ENCODE measurements at regions of chr13 and their contacts with region 1.

Region 1: GRCh38 chr13:87274209-87274819 is 396.9 kb upstream of the SLITRK5 start:
- DNase-seq: peak in 1 of 2 donors; percentile 15
- ATAC-seq: no peak
- H3K4me3 ChIP-seq: no peak overlapping the region
- H3K27ac ChIP-seq: no peak overlapping the region
- H3K4me1 ChIP-seq: no peaks in the 10 kb centered on the region
- H3K27me3 ChIP-seq: no peaks in the 10 kb centered on the region
- CTCF ChIP-seq: peak in 8 of 9 donors; percentile 29 to 63 (median 43)

Region 2: DNA sequence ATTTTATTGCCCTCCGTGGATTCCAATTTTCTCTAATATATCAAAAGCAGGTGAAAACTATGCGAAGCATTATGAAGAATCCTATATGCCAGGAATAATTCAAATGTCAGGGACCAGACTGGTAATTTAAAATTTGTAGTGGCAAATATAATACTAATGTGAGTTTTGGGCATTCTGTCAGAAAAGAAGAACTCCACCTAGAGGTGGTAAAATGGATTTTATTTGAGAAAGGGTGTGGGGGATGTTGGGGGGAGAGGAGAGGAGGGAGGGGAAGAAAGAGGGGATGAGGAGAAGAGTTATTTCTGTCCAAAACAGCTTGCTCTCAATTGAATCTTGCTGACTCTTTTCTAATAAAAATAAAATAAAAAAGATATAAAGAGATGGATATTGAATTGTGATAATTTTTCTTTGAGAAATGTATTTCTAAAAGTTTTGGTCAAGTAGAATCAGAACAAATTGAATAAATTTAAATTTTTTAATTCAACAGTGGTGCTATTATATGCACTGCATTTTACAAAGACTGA is 532.5 kb before region 1 on chr13:
- intact Hi-C with region 1: no loop called
- DNase-seq: no peak
- ATAC-seq: no peak
- H3K4me3 ChIP-seq: no peak overlapping the region
- H3K27ac ChIP-seq: no peak overlapping the region
- H3K4me1 ChIP-seq: no peaks in the 10 kb centered on the region
- H3K27me3 ChIP-seq: no peaks in the 10 kb centered on the region
- CTCF ChIP-seq: no peak

Region 3: GRCh38 chr13:86862137-86862536 is 412.2 kb before region 1 on chr13:
- intact Hi-C with region 1: loop called in 1 of 10 experiments (anchors 10 kb)
- DNase-seq: no peak
- ATAC-seq: no peak
- H3K4me3 ChIP-seq: no peak overlapping the region
- H3K27ac ChIP-seq: no peak overlapping the region
- H3K4me1 ChIP-seq: no peaks in the 10 kb centered on the region
- H3K27me3 ChIP-seq: no peaks in the 10 kb centered on the region
- CTCF ChIP-seq: no peak

Region 4: DNA sequence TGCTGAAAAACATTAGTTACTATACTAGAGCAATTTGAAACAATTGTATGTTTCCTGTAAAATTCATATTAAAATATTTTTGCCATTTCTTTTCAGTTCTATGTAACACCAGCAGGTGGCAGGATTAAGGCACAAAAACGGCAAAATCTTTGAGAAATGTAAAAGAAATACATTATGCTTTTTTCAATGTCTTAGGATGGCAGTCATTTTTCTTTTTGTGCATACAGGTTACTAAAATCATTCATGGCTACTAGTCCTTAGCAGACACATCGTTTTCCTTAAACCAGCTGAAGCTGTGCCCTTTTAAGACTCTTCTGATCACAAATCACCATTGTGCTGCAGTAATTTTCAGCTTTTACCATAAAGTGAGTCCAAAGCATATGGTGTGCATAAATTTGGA is 403.9 kb before region 1 on chr13:
- intact Hi-C with region 1: loop called in 5 of 10 experiments (anchors 2 to 10 kb)
- DNase-seq: no peak
- ATAC-seq: no peak
- H3K4me3 ChIP-seq: no peak overlapping the region
- H3K27ac ChIP-seq: no peak overlapping the region
- H3K4me1 ChIP-seq: no peaks in the 10 kb centered on the region
- H3K27me3 ChIP-seq: no peaks in the 10 kb centered on the region
- CTCF ChIP-seq: peak in 7 of 9 donors; percentile 46 to 71 (median 57)